ENCODE measurements at regions of chr11 and their contacts with region 1.

Region 1: DNA sequence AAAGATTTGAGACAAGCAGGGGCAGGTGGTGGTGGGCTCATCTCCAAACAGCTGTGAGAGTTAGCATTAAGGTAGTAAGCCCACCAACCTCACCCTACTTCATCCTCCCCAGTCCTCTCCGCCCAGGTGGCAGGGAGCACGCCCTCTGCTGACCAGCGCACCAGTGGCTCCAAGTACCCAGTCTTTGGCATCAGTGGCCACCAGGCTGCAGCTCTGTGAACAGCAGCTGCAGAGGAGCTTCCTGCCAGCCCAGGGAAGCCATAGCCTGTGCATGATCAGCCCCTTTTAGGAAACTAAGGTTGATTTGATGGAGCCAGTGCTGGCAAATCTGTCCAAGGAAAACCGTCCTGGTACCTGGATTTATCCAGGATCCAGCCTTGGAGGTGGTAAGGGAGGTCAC is 21.7 kb downstream of the CAVIN3 start:
- DNase-seq: peak; percentile 32
- H3K4me3 ChIP-seq: no peak overlapping the region
- H3K27ac ChIP-seq: no peak overlapping the region
- H3K4me1 ChIP-seq: no peaks in the 10 kb centered on the region
- H3K27me3 ChIP-seq: peaks cover 0 to 2% of the 10 kb centered on the region in 2 experiments
- CTCF ChIP-seq: peak; percentile 58 to 83
- POLR2A ChIP-seq: no peak

Region 2: DNA sequence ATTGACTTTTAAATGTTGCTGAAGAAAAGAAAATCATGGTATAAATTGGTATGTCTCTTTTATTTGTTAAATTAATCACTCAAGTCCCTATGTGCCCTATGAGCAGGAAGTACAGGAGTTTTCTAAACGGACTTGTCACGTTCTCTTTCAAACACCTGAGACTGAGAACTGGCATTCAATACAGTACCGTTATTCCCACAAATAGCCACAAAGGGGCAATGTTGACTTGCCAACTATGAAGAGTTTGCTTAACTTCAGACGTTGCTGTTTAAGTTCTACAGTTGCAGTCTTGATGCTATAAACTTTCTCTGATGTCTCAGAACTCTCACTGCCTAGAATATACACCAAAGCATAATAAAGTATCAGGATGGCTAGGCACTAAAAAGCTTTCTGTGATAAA is 275.6 kb before region 1 on chr11:
- CTCF ChIA-PET with region 1: interaction called, 16 read pairs
- POLR2A ChIA-PET with region 1: no interaction called
- dilution Hi-C with region 1: no loop called
- intact Hi-C with region 1: loop called (anchors 1 kb)
- DNase-seq: peak; percentile 70
- H3K4me3 ChIP-seq: no peak overlapping the region
- H3K27ac ChIP-seq: no peak overlapping the region
- H3K4me1 ChIP-seq: no peaks in the 10 kb centered on the region
- H3K27me3 ChIP-seq: peaks cover 5 to 9% of the 10 kb centered on the region in 2 experiments
- CTCF ChIP-seq: peak; percentile 36 to 46
- POLR2A ChIP-seq: no peak

Region 3: GRCh38 chr11:6538456-6538855 is 239.9 kb after region 1 on chr11:
- CTCF ChIA-PET with region 1: no interaction called
- POLR2A ChIA-PET with region 1: no interaction called
- dilution Hi-C with region 1: no loop called
- intact Hi-C with region 1: no loop called
- DNase-seq: no peak
- H3K4me3 ChIP-seq: no peak overlapping the region
- H3K27ac ChIP-seq: no peak overlapping the region
- H3K4me1 ChIP-seq: no peaks in the 10 kb centered on the region
- H3K27me3 ChIP-seq: no peaks in the 10 kb centered on the region
- CTCF ChIP-seq: no peak
- POLR2A ChIP-seq: no peak

Measured in endothelial cell of umbilical vein (primary cell).